ENCODE measurements at regions of chr6 and their contacts with region 1.

Region 1: DNA sequence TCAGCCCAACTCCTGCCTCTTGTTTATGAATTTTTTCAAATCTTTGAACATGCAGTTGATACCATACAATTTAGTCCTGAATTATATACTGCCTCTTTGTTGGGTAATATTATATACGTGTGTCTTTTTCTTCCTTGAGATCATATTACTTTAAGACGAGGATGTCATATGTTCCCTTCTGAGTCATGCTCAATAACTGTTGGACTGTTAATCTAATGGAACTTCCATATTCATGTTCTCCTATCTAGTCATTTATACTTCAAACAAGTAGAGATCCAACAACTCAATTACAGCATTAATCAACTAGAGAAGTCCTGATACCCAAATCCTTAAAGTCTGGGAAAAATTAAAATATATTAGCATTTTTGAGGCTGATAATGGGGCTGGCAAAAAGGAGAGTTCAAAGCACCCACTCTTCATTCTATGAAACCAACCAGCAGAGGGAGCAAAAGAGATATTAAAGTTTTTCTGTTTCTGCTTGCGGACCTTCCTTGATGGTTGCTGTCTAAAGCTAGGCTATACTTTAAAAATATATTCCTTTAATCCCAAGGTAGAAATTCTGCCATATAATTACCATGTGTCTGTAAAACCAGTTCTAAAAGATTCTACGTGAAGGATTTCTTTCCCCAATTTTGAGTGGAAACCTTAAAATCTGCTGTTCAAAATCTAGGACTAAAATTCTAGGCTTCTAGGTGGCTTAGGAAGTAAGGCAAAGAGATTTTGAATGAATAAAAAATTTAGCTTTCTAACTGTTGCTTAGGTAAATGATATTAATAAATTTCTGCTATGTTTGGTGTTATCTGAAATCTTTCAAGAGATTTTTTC is 498.9 kb downstream of the BCKDHB start:
- DNase-seq: peak; percentile 60
- H3K4me3 ChIP-seq: no peak overlapping the region
- H3K27ac ChIP-seq: no peak overlapping the region
- H3K4me1 ChIP-seq: no peaks in the 10 kb centered on the region
- H3K27me3 ChIP-seq: no peaks in the 10 kb centered on the region
- CTCF ChIP-seq: peak; percentile 25 to 46
- POLR2A ChIP-seq: no peak

Region 2: GRCh38 chr6:80133020-80133419 is 472.4 kb before region 1 on chr6:
- CTCF ChIA-PET with region 1: no interaction called
- POLR2A ChIA-PET with region 1: no interaction called
- dilution Hi-C with region 1: no loop called
- intact Hi-C with region 1: loop called (anchors 1 kb)
- DNase-seq: peak; percentile 58
- H3K4me3 ChIP-seq: no peak overlapping the region
- H3K27ac ChIP-seq: no peak overlapping the region
- H3K4me1 ChIP-seq: peaks cover 7% of the 10 kb centered on the region
- H3K27me3 ChIP-seq: no peaks in the 10 kb centered on the region
- CTCF ChIP-seq: peak; percentile 39 to 45
- POLR2A ChIP-seq: no peak

Region 3: DNA sequence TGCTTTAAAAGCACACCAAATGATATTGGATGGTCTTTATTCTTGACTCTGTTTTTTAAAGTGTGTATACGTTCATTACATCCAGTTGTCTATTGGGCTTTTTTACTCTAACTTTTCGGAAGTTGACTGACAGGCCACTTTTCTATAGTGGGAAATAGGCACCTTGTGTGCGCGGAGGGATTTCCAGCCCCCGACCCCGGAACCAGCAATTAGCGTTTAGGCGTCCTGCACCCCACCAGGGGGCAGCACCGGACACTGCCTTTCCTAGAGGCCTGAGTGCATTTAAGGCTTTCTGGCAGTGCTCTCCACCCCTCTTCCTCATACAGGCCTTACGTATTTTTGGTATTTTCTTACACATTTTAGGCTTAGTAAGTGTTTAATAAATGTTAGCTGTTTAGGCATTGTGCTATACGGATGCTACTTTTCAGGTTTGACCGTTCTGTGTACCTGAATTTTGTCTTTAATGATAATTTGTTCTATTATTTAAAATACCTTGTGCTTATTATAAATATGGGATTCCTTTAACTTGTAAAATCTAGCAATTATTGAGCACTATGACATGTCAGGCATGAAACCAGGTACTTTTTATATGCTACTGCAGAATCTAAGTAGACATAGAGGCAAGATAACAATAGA is 267.1 kb before region 1 on chr6:
- CTCF ChIA-PET with region 1: interaction called, 3 read pairs
- POLR2A ChIA-PET with region 1: no interaction called
- dilution Hi-C with region 1: no loop called
- intact Hi-C with region 1: loop called (anchors 1 kb)
- DNase-seq: peak; percentile 31
- H3K4me3 ChIP-seq: no peak overlapping the region
- H3K27ac ChIP-seq: no peak overlapping the region
- H3K4me1 ChIP-seq: peaks cover 4% of the 10 kb centered on the region
- H3K27me3 ChIP-seq: no peaks in the 10 kb centered on the region
- CTCF ChIP-seq: peak; percentile 64 to 69
- POLR2A ChIP-seq: no peak

Region 4: DNA sequence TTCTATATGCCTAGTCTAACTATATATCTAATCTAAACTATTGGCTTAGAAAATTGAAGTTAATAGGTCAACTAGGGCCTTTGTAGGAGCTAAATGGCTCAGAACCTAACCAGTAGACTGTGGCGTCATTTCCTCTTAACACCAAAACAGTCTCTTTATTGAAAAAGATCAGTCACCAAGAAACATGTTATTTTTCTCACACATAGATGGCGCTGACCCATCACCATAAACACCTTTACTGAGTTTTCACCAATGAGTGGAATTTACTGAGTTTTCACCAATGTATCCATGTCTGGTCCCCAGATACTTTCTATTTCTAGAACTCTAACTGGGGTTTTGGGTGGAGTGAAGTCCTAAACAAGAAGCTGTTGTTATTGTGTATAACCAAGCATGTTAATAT is 137.1 kb after region 1 on chr6:
- CTCF ChIA-PET with region 1: interaction called, 4 read pairs
- POLR2A ChIA-PET with region 1: no interaction called
- dilution Hi-C with region 1: no loop called
- intact Hi-C with region 1: loop called (anchors 2 kb)
- DNase-seq: peak; percentile 33
- H3K4me3 ChIP-seq: no peak overlapping the region
- H3K27ac ChIP-seq: no peak overlapping the region
- H3K4me1 ChIP-seq: no peaks in the 10 kb centered on the region
- H3K27me3 ChIP-seq: no peaks in the 10 kb centered on the region
- CTCF ChIP-seq: peak; percentile 31
- POLR2A ChIP-seq: no peak

Region 5: DNA sequence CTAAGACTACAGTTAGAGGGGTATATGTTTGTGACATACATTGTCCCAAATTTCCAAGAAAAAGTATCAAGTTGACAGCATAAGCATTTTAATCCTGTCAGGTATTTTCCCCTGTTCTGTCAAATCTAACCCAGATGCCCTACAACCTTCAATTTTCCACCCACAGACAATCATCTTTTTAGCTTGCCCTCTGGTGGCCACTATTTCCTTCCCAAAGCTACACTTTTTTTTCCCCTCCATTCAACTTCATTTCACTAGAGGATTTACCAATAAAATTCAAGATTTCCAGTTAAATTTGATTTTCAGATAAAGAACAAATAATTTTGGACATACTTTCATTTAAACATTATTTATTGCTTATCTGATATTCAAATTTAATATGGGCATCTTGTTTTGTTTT is 860.5 kb after region 1 on chr6:
- CTCF ChIA-PET with region 1: interaction called, 3 read pairs
- POLR2A ChIA-PET with region 1: no interaction called
- dilution Hi-C with region 1: no loop called
- intact Hi-C with region 1: loop called (anchors 1 kb)
- DNase-seq: peak; percentile 19
- H3K4me3 ChIP-seq: no peak overlapping the region
- H3K27ac ChIP-seq: no peak overlapping the region
- H3K4me1 ChIP-seq: no peaks in the 10 kb centered on the region
- H3K27me3 ChIP-seq: no peaks in the 10 kb centered on the region
- CTCF ChIP-seq: peak; percentile 28 to 38
- POLR2A ChIP-seq: no peak

Region 6: GRCh38 chr6:82040405-82041221 is 1435.2 kb after region 1 on chr6:
- CTCF ChIA-PET with region 1: interaction called, 11 read pairs
- POLR2A ChIA-PET with region 1: no interaction called
- dilution Hi-C with region 1: no loop called
- intact Hi-C with region 1: no loop called
- DNase-seq: peak; percentile 72
- H3K4me3 ChIP-seq: no peak overlapping the region
- H3K27ac ChIP-seq: no peak overlapping the region
- H3K4me1 ChIP-seq: peaks cover 9% of the 10 kb centered on the region
- H3K27me3 ChIP-seq: no peaks in the 10 kb centered on the region
- CTCF ChIP-seq: peak; percentile 73 to 76
- POLR2A ChIP-seq: no peak